ENCODE measurements at regions of chr17 and their contacts with region 1.

Region 1: DNA sequence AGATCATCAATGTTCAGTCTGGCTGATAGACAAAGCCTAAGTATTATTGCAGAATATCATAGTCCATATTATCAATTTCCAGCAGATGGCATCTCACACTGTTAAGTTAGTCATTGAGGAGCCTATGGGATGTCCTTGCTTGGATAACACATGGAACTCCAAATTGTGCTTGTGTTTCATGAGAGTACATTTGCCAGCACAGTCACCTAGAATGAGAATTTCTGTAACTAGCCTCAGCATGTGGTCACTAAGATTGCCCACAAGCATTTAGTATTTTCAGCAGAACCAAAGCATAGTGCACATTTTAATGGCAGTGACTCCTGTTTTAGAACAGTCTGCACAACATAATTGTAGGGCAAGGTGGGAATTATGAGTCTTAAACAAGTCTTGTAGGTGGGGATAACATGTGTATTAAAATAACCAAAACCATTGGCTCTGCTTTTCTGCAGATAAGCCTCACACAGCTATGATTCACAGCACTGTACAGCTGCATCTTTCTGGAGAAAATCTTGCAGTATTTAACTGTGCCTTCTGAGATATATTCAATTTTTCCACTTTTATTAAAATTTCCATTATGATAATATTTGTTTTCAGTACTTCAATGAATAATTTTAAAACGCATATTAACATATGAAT is 882.8 kb upstream of the SOX9 start:
- DNase-seq: peak; percentile 87
- ATAC-seq: peak; percentile 97
- H3K4me3 ChIP-seq: no peak overlapping the region
- H3K27ac ChIP-seq: peak overlapping the region; percentile 32
- H3K4me1 ChIP-seq: peaks cover 4% of the 10 kb centered on the region; the same call in 1 of the 2 replicates
- H3K27me3 ChIP-seq: no peaks in the 10 kb centered on the region
- CTCF ChIP-seq: peak; percentile 85

Region 2: DNA sequence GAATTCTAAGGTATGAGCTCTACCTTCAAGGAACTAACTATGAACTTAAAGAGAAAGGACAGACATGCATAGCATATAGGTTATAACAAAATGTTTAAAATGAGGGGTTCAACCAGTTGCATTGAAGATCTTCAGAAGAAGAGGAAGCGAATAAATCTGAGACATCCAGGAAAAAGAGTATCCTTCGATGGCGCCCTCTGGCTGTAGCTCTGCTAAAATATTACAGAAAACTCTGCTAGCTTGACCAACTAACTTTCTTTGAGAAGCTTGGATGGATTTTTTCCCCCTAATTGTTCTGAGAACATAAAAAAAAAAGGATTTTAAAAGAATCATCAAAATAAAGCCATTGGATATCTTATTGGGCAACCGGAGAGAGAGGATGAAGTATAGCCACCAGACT is 222.9 kb after region 1 on chr17:
- CTCF ChIA-PET with region 1: interaction called, 3 read pairs
- POLR2A ChIA-PET with region 1: no interaction called
- intact Hi-C with region 1: loop called (anchors 1 kb)
- DNase-seq: peak; percentile 74
- ATAC-seq: no peak
- H3K4me3 ChIP-seq: no peak overlapping the region
- H3K27ac ChIP-seq: no peak overlapping the region
- H3K4me1 ChIP-seq: no peaks in the 10 kb centered on the region
- H3K27me3 ChIP-seq: no peaks in the 10 kb centered on the region
- CTCF ChIP-seq: peak; percentile 89

Region 3: GRCh38 chr17:71572343-71572742 is 334.3 kb after region 1 on chr17:
- CTCF ChIA-PET with region 1: no interaction called
- POLR2A ChIA-PET with region 1: no interaction called
- intact Hi-C with region 1: loop called (anchors 10 kb)
- DNase-seq: peak; percentile 25
- ATAC-seq: peak; percentile 33
- H3K4me3 ChIP-seq: no peak overlapping the region
- H3K27ac ChIP-seq: no peak overlapping the region
- H3K4me1 ChIP-seq: 0 out of 2 replicates have a peak, but pooled peaks cover 3% of the 10 kb centered on the region
- H3K27me3 ChIP-seq: no peaks in the 10 kb centered on the region
- CTCF ChIP-seq: no peak

Region 4: GRCh38 chr17:71764505-71764904 is 526.5 kb after region 1 on chr17:
- CTCF ChIA-PET with region 1: no interaction called
- POLR2A ChIA-PET with region 1: no interaction called
- intact Hi-C with region 1: loop called (anchors 5 kb)
- DNase-seq: peak; percentile 53
- ATAC-seq: peak; percentile 62
- H3K4me3 ChIP-seq: no peak overlapping the region
- H3K27ac ChIP-seq: no peak overlapping the region
- H3K4me1 ChIP-seq: peaks cover 13% of the 10 kb centered on the region
- H3K27me3 ChIP-seq: no peaks in the 10 kb centered on the region
- CTCF ChIP-seq: peak; percentile 71